Motor neuron (in vitro differentiated cells): ENCODE measurements at regions of chr1 and their contacts with region 1.

Region 1: DNA sequence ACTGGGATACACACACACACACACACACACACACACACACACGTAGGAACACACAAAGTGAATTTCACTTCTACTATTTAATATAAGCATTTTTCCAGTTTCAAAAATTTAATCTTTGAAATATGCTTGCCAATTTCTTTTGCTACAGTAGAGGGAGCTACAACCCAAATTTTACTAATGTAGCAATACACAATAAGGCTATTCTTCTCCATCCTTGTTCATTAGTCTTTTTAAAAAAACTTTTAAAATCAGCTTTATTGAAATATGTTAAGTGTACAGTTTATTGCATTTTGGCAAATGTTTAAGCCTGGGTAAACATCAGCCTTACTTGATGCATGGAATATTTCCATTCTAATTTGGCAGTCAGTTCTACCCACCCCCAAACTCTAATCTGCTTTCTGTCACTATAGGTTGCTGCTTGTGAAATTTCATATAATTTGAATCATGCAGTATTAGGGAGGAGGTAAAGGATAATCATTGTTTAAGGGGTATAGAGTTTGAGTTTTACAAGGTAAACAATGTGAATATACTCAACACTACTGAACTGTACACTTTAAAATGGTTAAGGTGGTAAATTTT is 93.0 kb upstream of the TENT5C start:
- ATAC-seq: peak in 3 of 8 experiments; percentile 20 to 78 (median 33)
- H3K4me3 ChIP-seq: no peak overlapping the region
- H3K27ac ChIP-seq: no peak overlapping the region
- H3K4me1 ChIP-seq: no peaks in the 10 kb centered on the region

Region 2: GRCh38 chr1:117895482-117896114 is 382.8 kb after region 1 on chr1:
- in situ Hi-C with region 1: loop called in 2 of 9 experiments (anchors 25 kb)
- ATAC-seq: peak; percentile 39 to 71 (median 58)
- H3K4me3 ChIP-seq: no peak overlapping the region
- H3K27ac ChIP-seq: no peak overlapping the region
- H3K4me1 ChIP-seq: no peaks in the 10 kb centered on the region

Region 3: GRCh38 chr1:117919376-117919775 is 406.5 kb after region 1 on chr1:
- in situ Hi-C with region 1: loop called in 1 of 9 experiments (anchors 25 kb)
- ATAC-seq: peak in 2 of 8 experiments; percentile 25 to 43
- H3K4me3 ChIP-seq: no peak overlapping the region
- H3K27ac ChIP-seq: no peak overlapping the region
- H3K4me1 ChIP-seq: no peaks in the 10 kb centered on the region